Motor neuron (in vitro differentiated cells): ENCODE measurements at regions of chr17 and their contacts with region 1.

Region 1: DNA sequence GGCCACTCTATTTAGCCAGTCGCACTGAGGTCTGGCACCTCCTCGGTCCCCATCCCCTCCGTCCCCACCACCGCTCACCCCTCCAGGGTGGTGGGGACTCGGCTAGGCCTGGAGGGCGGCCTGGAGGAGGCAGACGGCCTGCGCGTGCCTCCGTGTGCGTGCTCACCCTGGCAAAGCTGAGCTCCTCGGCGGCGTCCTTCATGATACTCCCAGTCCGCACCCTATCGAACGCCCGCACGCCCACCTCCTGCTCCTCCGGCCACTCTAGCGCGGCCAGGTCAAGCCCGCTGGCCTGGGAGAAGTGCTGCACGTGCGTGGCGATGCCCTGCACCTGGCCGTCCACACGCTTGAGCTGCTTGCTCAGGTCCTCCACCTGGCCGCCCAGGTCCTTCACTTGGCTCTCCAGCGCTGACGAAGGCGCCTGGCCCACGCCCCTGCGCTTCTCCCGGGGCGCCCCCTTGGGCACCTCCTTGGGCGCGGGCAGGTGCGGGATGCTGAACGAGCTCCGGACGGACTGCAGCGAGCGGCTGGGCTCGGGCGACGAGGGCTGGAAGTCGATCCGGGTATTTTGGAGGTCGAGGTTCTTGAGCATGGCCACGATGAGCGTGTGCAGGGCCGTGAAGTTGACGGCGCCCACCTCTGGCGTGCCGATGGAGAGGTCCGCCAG is 644 bp downstream of the QRICH2 start:
- ATAC-seq: peak in 2 of 8 experiments; percentile 7 to 9
- H3K4me3 ChIP-seq: no peak overlapping the region
- H3K27ac ChIP-seq: no peak overlapping the region
- H3K4me1 ChIP-seq: peaks cover 2 to 6% of the 10 kb centered on the region in 2 donors

Region 2: DNA sequence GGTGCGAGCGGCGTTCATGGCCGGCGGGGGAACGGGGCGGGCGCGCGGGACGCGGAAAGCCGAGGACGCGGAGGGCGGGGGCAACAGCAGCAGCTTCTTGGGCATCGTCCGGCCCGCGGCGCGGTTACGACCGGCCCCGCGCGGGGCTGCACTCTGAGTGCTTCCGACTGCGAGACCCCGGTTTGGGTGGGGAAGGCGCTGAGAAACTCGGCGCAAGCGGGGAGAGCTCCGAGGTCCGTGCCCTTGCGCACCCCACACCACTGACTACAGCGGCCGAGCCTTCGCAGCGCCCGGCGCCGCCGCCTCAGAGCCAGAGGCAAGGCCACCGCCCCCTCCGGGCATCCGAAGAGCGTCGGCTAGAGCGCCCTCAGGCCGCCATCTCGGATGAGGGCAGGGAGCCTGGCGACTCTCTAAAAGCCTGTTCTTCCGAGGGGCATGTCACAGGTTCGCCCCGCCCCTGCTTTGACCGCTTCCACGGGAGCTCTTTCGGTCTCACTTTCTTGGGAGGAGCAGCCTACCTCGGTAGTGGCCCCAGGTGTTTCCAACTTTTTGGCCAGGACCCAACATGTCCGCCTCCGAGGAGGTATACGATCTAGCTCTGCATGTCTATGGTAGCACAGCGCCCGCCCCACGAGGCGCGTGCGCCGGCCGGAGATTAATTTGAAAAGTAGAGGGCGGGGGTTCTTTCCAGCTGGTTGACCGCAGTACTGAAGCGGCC is 46.3 kb after region 1 on chr17 and contains the start of gene PRPSAP1:
- in situ Hi-C with region 1: no loop called
- ATAC-seq: peak; percentile 82 to 96 (median 94)
- H3K4me3 ChIP-seq: peak within 1 kb of the TSS; percentile 63 to 87 (median 67)
- H3K27ac ChIP-seq: peak within 1 kb of the TSS; percentile 94 to 98
- H3K4me1 ChIP-seq: peaks cover 2 to 5% of the 10 kb centered on the region in 2 donors
- total RNA-seq, gene PRPSAP1: 21.3 to 60.3 (median 44.3) TPM

Region 3: GRCh38 chr17:76384222-76384986 is 77.0 kb after region 1 on chr17 and contains the start of gene SPHK1:
- in situ Hi-C with region 1: loop called in 1 of 9 experiments (anchors 10 kb)
- ATAC-seq: peak; percentile 39 to 69 (median 49)
- H3K4me3 ChIP-seq: peak within 1 kb of the TSS; percentile 34 to 44 (median 42)
- H3K27ac ChIP-seq: no peak within 1 kb of the TSS
- H3K4me1 ChIP-seq: peaks cover 12 to 13% of the 10 kb centered on the region in 2 donors
- total RNA-seq, gene SPHK1: 0.50 to 61.8 (median 5.8) TPM

Region 4: DNA sequence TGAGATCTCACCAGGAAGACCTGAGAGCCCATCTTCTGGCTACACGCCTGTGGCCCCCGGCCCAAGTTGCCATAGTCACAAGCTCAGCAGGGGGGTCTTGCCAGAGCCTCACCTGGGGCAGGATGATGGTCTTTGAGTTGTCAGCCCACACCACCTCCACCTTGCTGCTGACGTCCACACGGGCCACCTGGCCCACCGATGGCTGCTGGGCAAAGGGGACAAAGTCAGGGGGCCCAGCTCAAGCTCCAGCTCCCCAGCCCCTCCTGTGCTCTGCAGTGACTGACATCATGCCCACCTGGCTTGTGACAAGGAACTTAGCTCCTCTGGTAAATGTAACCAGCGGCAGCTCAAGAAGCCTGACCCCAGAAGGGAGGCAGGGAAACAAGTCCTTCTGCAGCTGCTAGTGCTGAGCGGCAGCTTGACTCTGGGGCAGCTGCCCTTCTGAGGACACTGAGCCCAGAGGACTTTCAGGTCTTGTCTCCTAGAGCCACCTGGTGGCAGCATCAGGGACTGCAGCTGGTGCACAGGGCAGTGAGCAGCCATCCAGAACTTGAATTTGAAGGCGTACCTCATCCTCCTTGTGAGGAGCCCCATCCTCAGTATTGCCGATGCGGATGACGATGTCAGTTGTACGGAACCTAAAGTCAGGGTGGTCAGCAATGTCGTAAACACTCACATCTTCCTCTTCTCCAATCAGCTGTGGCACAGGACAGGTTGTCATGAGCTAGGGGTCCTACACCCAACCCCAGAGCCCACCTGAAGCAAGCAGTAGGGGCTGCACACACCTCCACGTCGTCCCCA is 90.5 kb after region 1 on chr17:
- in situ Hi-C with region 1: loop called in 2 of 9 experiments (anchors 10 to 25 kb)
- ATAC-seq: peak; percentile 74 to 97 (median 86)
- H3K4me3 ChIP-seq: no peak overlapping the region
- H3K27ac ChIP-seq: no peak overlapping the region
- H3K4me1 ChIP-seq: no peaks in the 10 kb centered on the region